GM12878 (cell line): ENCODE measurements at regions of chr5 and their contacts with region 1.

Region 1: DNA sequence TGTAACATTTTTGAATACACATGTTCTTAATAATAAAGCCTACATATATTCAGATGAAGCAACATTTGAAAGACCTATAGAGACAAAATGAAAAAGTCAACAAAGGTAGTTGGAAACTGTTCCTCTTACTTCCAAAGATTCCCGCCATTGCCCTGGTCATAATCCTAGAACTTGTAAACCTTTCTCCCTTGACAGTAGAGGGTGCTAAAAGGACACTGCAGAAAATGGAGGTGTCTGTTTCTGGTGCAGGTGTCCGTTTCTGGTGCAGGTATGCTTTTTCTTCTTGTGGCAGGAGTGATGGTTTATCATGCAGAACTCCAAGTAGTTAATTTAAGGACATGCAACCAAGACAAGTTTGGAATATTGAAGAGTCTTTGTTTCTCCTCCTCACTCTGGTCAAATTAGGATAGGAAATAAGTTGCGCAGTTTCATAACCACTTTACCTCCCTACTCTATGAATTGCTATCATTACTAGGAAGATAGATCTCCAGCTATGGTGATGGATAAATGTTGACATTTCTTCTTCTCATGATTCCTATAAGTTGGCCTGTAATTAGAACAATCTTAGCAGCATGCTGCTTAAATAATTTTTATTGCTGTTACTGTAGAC is 56.0 kb upstream of the FAM174A start:
- DNase-seq: peak; percentile 15
- ATAC-seq: peak; percentile 88
- H3K4me3 ChIP-seq: no peak overlapping the region
- H3K27ac ChIP-seq: no peak overlapping the region
- H3K4me1 ChIP-seq: no peaks in the 10 kb centered on the region
- H3K27me3 ChIP-seq: no peaks in the 10 kb centered on the region
- CTCF ChIP-seq: peak; percentile 68 to 71 (median 71)
- EP300 ChIP-seq: no peak
- POLR2A ChIP-seq: no peak
- RAD21 ChIP-seq: peak; percentile 97

Region 2: GRCh38 chr5:100623719-100624118 is 144.5 kb after region 1 on chr5:
- CTCF ChIA-PET with region 1: interaction called, 5 read pairs
- POLR2A ChIA-PET with region 1: no interaction called
- RAD21 ChIA-PET with region 1: no interaction called
- SMC1A ChIA-PET with region 1: interaction called, 5 read pairs
- in situ Hi-C with region 1: no loop called
- intact Hi-C with region 1: loop called (anchors 1 kb)
- DNase-seq: no peak
- ATAC-seq: peak; percentile 96
- H3K4me3 ChIP-seq: no peak overlapping the region
- H3K27ac ChIP-seq: no peak overlapping the region
- H3K4me1 ChIP-seq: no peaks in the 10 kb centered on the region
- H3K27me3 ChIP-seq: no peaks in the 10 kb centered on the region
- CTCF ChIP-seq: peak; percentile 62 to 67 (median 62)
- EP300 ChIP-seq: no peak
- POLR2A ChIP-seq: no peak
- RAD21 ChIP-seq: peak; percentile 92

Region 3: GRCh38 chr5:100772548-100772947 is 293.4 kb after region 1 on chr5:
- CTCF ChIA-PET with region 1: interaction called, 3 read pairs
- POLR2A ChIA-PET with region 1: no interaction called
- RAD21 ChIA-PET with region 1: no interaction called
- SMC1A ChIA-PET with region 1: interaction called, 3 read pairs
- in situ Hi-C with region 1: no loop called
- intact Hi-C with region 1: loop called (anchors 5 kb)
- DNase-seq: no peak
- ATAC-seq: no peak; the same call in 2 of the 3 replicates
- H3K4me3 ChIP-seq: no peak overlapping the region
- H3K27ac ChIP-seq: no peak overlapping the region
- H3K4me1 ChIP-seq: peaks cover 10% of the 10 kb centered on the region
- H3K27me3 ChIP-seq: no peaks in the 10 kb centered on the region
- CTCF ChIP-seq: no peak
- EP300 ChIP-seq: no peak
- POLR2A ChIP-seq: no peak
- RAD21 ChIP-seq: no peak

Region 4: DNA sequence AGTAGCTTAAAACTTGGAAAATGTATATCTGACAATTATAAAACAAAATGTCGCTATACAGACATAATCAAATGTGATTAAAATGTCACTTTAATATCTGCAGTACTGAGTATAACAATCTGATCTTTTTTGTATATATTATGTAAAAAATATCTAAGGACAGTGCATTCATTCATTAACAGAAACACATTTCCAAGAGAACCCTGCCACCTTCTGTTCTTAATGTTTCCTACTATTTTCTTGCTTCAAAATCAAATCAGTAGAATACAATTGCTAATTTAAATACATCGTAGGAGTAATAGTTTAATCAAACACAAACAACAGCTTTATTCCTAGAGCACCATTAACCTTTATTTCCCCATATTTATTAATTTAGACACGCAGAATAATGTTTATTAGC is 566.5 kb after region 1 on chr5:
- CTCF ChIA-PET with region 1: no interaction called
- POLR2A ChIA-PET with region 1: no interaction called
- RAD21 ChIA-PET with region 1: no interaction called
- SMC1A ChIA-PET with region 1: no interaction called
- in situ Hi-C with region 1: no loop called
- intact Hi-C with region 1: loop called (anchors 1 kb)
- DNase-seq: no peak
- ATAC-seq: peak; percentile 55
- H3K4me3 ChIP-seq: no peak overlapping the region
- H3K27ac ChIP-seq: no peak overlapping the region
- H3K4me1 ChIP-seq: no peaks in the 10 kb centered on the region
- H3K27me3 ChIP-seq: no peaks in the 10 kb centered on the region
- CTCF ChIP-seq: peak in 1 of 3 experiments; percentile 5; a peak in 2 of 6 replicates
- EP300 ChIP-seq: no peak
- POLR2A ChIP-seq: no peak
- RAD21 ChIP-seq: peak; percentile 70

Region 5: GRCh38 chr5:101390151-101390908 is 911.1 kb after region 1 on chr5:
- CTCF ChIA-PET with region 1: interaction called, 7 read pairs
- POLR2A ChIA-PET with region 1: interaction called, 3 read pairs
- RAD21 ChIA-PET with region 1: interaction called, 8 read pairs
- SMC1A ChIA-PET with region 1: interaction called, 4 read pairs
- in situ Hi-C with region 1: no loop called
- intact Hi-C with region 1: loop called (anchors 1 kb)
- DNase-seq: peak; percentile 12
- ATAC-seq: peak; percentile 57
- H3K4me3 ChIP-seq: no peak overlapping the region
- H3K27ac ChIP-seq: no peak overlapping the region
- H3K4me1 ChIP-seq: no peaks in the 10 kb centered on the region
- H3K27me3 ChIP-seq: no peaks in the 10 kb centered on the region
- CTCF ChIP-seq: peak; percentile 42 to 67 (median 58); a peak in 5 of 6 replicates
- EP300 ChIP-seq: no peak
- POLR2A ChIP-seq: no peak
- RAD21 ChIP-seq: peak; percentile 68

Region 6: DNA sequence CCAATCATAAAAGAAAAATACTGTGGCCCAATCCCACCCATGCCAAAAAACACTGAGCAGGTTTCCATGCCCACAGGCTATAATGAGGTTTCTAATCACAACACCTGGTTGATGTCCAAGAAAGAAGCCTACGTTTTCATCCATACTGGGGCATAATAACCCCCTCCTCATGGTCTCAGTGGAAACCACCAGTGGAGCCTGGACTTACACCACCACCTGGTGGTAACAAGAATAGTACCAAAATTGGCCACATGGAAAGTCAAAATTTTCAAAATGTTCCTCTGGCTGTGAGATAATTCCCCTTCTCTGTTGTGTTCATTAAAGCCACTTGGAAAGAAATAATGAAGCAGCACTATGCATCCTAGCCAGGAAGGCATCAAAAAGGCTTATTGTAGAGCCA is 1111.2 kb after region 1 on chr5:
- CTCF ChIA-PET with region 1: no interaction called
- POLR2A ChIA-PET with region 1: no interaction called
- RAD21 ChIA-PET with region 1: no interaction called
- SMC1A ChIA-PET with region 1: no interaction called
- in situ Hi-C with region 1: no loop called
- intact Hi-C with region 1: loop called (anchors 2 kb)
- DNase-seq: no peak
- ATAC-seq: peak; percentile 63
- H3K4me3 ChIP-seq: no peak overlapping the region
- H3K27ac ChIP-seq: no peak overlapping the region
- H3K4me1 ChIP-seq: no peaks in the 10 kb centered on the region
- H3K27me3 ChIP-seq: no peaks in the 10 kb centered on the region
- CTCF ChIP-seq: peak; percentile 28 to 42 (median 42); a peak in 5 of 6 replicates
- EP300 ChIP-seq: no peak
- POLR2A ChIP-seq: no peak
- RAD21 ChIP-seq: peak; percentile 55

Region 7: DNA sequence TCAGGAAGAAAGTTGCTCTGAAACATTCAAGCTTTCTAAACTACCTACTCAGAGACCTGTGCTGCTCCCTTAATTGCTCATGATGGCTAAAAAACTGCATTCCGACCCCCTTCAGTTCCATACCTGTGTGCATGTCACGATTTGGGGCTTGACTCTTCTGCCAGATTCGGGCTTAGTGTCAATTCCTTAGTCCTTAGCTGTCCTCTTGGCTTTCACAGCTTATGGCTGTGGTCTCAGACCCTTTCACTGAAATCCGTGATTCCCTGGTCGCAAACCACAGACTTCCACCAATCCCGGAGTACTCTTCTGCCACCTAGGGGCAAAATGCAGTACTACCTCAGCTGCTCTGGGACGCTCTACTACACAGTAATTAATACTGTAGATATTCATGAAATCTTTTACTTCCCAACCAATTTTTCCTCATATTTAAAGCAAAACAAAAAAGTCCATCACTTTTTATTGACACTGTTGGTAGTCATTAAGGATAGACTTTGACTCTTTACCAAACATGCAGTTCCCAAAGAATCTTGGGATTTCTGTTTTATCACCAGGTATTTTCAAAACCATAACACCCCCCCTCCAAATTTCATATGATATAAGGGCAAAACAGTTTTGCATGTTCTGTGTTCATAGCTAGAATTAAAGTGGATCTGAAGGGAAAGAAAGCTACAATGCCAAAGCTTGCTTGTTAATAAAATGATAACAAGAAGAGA is 1199.5 kb after region 1 on chr5:
- CTCF ChIA-PET with region 1: interaction called, 5 read pairs
- POLR2A ChIA-PET with region 1: no interaction called
- RAD21 ChIA-PET with region 1: no interaction called
- SMC1A ChIA-PET with region 1: no interaction called
- in situ Hi-C with region 1: no loop called
- intact Hi-C with region 1: loop called (anchors 2 kb)
- DNase-seq: peak; percentile 7
- ATAC-seq: peak; percentile 84
- H3K4me3 ChIP-seq: no peak overlapping the region
- H3K27ac ChIP-seq: no peak overlapping the region
- H3K4me1 ChIP-seq: no peaks in the 10 kb centered on the region
- H3K27me3 ChIP-seq: no peaks in the 10 kb centered on the region
- CTCF ChIP-seq: peak; percentile 76 to 89 (median 89)
- EP300 ChIP-seq: no peak
- POLR2A ChIP-seq: no peak
- RAD21 ChIP-seq: peak; percentile 79